IMR-90 (cell line): ENCODE measurements at regions of chr9 and their contacts with region 1.

Region 1: GRCh38 chr9:91992461-91993041 is 42.5 kb upstream of the ROR2 start:
- DNase-seq: peak; percentile 48
- ATAC-seq: peak; percentile 27
- H3K4me3 ChIP-seq: no peak overlapping the region
- H3K27ac ChIP-seq: peak overlapping the region; percentile 13; the same call in 1 of the 2 replicates
- H3K4me1 ChIP-seq: peaks cover 2% of the 10 kb centered on the region; the same call in 1 of the 2 replicates
- H3K27me3 ChIP-seq: peaks cover 16% of the 10 kb centered on the region
- CTCF ChIP-seq: no peak
- POLR2A ChIP-seq: no peak
- RAD21 ChIP-seq: no peak

Region 2: DNA sequence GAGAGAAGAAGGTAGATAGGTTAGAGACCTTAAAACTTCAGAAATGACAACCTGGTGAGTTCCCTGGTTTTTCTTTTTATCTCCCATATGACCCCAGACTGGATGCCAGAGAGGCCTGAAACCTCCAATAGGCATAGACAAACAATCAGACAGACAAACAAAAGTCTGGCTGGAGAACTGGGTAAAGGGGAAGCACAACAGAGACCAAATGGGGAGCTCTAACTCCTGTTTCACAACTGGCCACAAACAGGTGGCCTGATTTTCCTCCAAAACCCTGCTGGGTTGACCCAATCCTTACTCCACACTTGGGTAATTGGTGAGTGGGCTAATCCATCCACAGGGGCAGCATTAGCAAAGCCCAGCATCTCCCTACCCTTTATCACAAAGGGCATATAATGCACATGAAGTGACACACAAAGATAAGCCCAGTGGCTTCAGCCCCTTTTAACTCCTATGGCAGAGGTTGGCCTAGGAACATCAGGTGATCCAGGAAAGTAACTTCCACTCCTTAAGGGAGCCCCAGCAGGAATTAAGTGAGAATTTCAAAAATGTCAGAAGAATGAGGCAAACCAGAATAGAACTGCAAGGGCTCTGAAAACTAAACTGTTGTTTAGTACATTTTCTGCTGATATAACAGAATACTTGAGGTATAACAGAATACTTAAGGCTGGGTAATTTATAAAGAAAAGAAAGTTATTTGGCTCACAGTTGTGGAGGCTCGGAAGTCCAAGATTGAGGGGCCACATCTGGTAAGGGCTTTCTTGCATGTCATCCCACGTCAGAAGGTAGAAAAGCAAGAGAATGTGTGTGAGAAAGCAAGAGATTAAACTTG is 18.4 kb after region 1 on chr9:
- CTCF ChIA-PET with region 1: no interaction called
- POLR2A ChIA-PET with region 1: no interaction called
- dilution Hi-C with region 1: no loop called
- in situ Hi-C with region 1: no loop called
- intact Hi-C with region 1: loop called (anchors 2 kb)
- DNase-seq: no peak
- ATAC-seq: peak; percentile 54
- H3K4me3 ChIP-seq: no peak overlapping the region
- H3K27ac ChIP-seq: no peak overlapping the region
- H3K4me1 ChIP-seq: peaks cover 3% of the 10 kb centered on the region; the same call in 1 of the 2 replicates
- H3K27me3 ChIP-seq: no peaks in the 10 kb centered on the region
- CTCF ChIP-seq: no peak
- POLR2A ChIP-seq: no peak
- RAD21 ChIP-seq: no peak

Region 3: DNA sequence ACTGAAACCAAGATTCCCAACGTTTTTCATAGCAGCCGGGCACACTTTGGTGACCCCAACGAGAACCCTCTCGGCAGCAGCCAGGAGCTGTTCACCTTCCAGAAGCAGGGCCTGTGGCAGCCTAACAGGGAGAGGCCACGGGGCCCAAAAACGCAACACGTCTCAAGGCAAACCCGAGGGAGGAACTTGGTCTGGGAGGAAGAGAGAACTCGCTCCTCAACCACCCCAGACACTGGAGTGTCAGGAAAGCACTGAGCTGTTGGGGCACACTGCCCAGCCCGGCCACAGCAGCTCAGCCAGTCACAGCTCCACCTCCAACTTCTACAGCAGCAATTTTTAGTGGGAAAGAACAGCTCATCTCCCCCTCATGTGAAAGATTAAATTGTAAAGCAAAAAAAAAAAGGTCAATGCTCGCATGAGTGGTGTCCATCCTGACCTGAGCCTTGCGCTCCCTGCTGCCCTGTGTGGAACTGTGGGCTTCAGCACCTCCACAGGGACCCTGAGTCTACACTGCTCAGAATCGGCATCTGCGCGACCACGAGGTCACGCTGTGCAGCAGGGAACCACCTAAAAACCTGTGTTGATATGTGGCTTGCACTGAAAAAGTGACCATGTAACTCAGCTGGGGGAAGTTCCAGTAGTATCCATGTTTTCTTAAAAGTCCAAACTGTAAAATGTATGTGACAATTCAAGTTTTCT is 622.4 kb after region 1 on chr9:
- CTCF ChIA-PET with region 1: no interaction called
- POLR2A ChIA-PET with region 1: interaction called, 17 read pairs
- dilution Hi-C with region 1: no loop called
- in situ Hi-C with region 1: no loop called
- intact Hi-C with region 1: no loop called
- DNase-seq: no peak
- ATAC-seq: 0 out of 2 replicates have a peak, but pooled peaks have one; percentile 37
- H3K4me3 ChIP-seq: no peak overlapping the region
- H3K27ac ChIP-seq: no peak overlapping the region
- H3K4me1 ChIP-seq: peaks cover 14% of the 10 kb centered on the region; the same call in 1 of the 2 replicates
- H3K27me3 ChIP-seq: no peaks in the 10 kb centered on the region
- CTCF ChIP-seq: no peak
- POLR2A ChIP-seq: no peak
- RAD21 ChIP-seq: no peak